ENCODE measurements at regions of chr1 and their contacts with region 1.

Region 1: GRCh38 chr1:214418391-214418790 is 133.0 kb downstream of the PTPN14 start:
- DNase-seq: no peak
- H3K4me3 Mint-ChIP-seq: peak overlapping the region; percentile 65
- H3K27ac Mint-ChIP-seq: peak overlapping the region; percentile 79
- H3K4me1 Mint-ChIP-seq: peaks cover 46% of the 10 kb centered on the region
- H3K27me3 Mint-ChIP-seq: peaks cover 2% of the 10 kb centered on the region

Region 2: GRCh38 chr1:214404154-214404553 is 14.2 kb before region 1 on chr1:
- intact Hi-C with region 1: loop called (anchors 2 kb)
- DNase-seq: no peak
- H3K4me3 Mint-ChIP-seq: no peak overlapping the region
- H3K27ac Mint-ChIP-seq: peak overlapping the region; percentile 81
- H3K4me1 Mint-ChIP-seq: peaks cover 38% of the 10 kb centered on the region
- H3K27me3 Mint-ChIP-seq: no peaks in the 10 kb centered on the region

Region 3: DNA sequence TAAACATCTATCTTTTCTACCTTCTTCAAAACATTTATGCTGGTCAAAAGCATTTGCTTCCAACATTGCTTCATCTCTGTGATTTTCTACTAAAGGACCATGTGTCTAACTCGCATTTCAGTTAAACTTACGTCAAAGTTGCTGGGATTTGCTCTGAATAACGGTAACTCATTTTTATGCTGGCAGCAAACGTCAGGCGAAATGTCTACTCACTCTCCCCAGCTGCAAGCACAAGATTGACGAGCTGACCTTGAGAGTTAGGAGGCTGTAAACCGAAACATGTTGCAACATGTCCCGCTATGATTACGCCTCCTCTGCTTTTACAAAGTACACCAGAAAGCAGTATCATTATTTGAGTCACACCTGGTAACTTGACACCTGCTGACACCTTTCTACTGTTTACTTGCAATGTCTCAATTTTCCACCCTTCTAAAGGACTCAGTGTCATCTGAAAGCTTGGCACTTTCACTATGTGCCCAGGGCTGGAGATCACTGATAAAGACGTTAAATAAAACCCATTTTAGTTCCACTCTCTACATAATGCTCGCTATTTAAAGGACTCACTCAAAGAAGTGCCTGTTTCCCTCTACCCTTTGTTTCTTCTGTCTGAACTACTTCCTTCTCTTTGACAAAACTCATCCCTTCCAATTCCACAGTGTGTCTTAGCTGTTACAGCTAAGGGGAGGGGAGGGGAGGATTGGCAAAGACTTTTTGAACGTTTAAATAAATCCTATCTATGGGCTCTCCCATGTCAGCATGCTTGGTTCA is 21.1 kb after region 1 on chr1:
- intact Hi-C with region 1: no loop called
- DNase-seq: peak; percentile 86
- H3K4me3 Mint-ChIP-seq: peak overlapping the region; percentile 74
- H3K27ac Mint-ChIP-seq: peak overlapping the region; percentile 98
- H3K4me1 Mint-ChIP-seq: peaks cover 55% of the 10 kb centered on the region
- H3K27me3 Mint-ChIP-seq: no peaks in the 10 kb centered on the region

Measured in activated CD4-positive, alpha-beta T cell treated with anti-CD3 and anti-CD28 coated beads, Interleukin-2, amount 10 ng/mL, durations not matched to agents 24 days and 14 days (primary cell).